CD8-positive, alpha-beta T cell (primary cell): ENCODE measurements at regions of chrX and their contacts with region 1.

Region 1: GRCh38 chrX:135521405-135522189 is 1.1 kb downstream of the INTS6L start:
- DNase-seq: peak; percentile 64 to 94 (median 79)
- ATAC-seq: peak; percentile 70
- H3K4me3 ChIP-seq: peak overlapping the region; percentile 73 to 85
- H3K4me3 Mint-ChIP-seq: peak overlapping the region; percentile 99
- H3K27ac ChIP-seq: peak overlapping the region; percentile 61 to 84
- H3K27ac Mint-ChIP-seq: peak overlapping the region; percentile 88
- H3K4me1 ChIP-seq: peaks cover 4% of the 10 kb centered on the region
- H3K4me1 Mint-ChIP-seq: peaks cover 46% of the 10 kb centered on the region
- H3K27me3 ChIP-seq: no peaks in the 10 kb centered on the region
- H3K27me3 Mint-ChIP-seq: no peaks in the 10 kb centered on the region
- CTCF ChIP-seq: no peak

Region 2: GRCh38 chrX:135003876-135004623 is 517.5 kb before region 1 on chrX:
- CTCF ChIA-PET with region 1: no interaction called
- POLR2A ChIA-PET with region 1: no interaction called
- intact Hi-C with region 1: loop called in 1 of 2 experiments (anchors 5 kb)
- DNase-seq: peak; percentile 72 to 93 (median 89)
- ATAC-seq: peak; percentile 98
- H3K4me3 ChIP-seq: peak overlapping the region; percentile 52 to 57
- H3K4me3 Mint-ChIP-seq: peak overlapping the region; percentile 88
- H3K27ac ChIP-seq: peak overlapping the region; percentile 38 to 72
- H3K27ac Mint-ChIP-seq: peak overlapping the region; percentile 91
- H3K4me1 ChIP-seq: peaks cover 9% of the 10 kb centered on the region
- H3K4me1 Mint-ChIP-seq: peaks cover 12% of the 10 kb centered on the region
- H3K27me3 ChIP-seq: no peaks in the 10 kb centered on the region
- H3K27me3 Mint-ChIP-seq: no peaks in the 10 kb centered on the region
- CTCF ChIP-seq: no peak

Region 3: GRCh38 chrX:135384161-135384836 is 137.3 kb before region 1 on chrX:
- CTCF ChIA-PET with region 1: no interaction called
- POLR2A ChIA-PET with region 1: no interaction called
- intact Hi-C with region 1: loop called in 1 of 2 experiments (anchors 1 kb)
- DNase-seq: peak; percentile 0 to 82 (median 30)
- ATAC-seq: peak; percentile 93
- H3K4me3 ChIP-seq: peak overlapping the region in 1 of 2 experiments; percentile 10
- H3K4me3 Mint-ChIP-seq: peak overlapping the region; percentile 66
- H3K27ac ChIP-seq: peak overlapping the region in 1 of 2 experiments; percentile 41
- H3K27ac Mint-ChIP-seq: peak overlapping the region; percentile 76
- H3K4me1 ChIP-seq: peaks cover 35% of the 10 kb centered on the region
- H3K4me1 Mint-ChIP-seq: peaks cover 42% of the 10 kb centered on the region
- H3K27me3 ChIP-seq: no peaks in the 10 kb centered on the region
- H3K27me3 Mint-ChIP-seq: no peaks in the 10 kb centered on the region
- CTCF ChIP-seq: no peak

Region 4: GRCh38 chrX:135536877-135537276 is 15.3 kb after region 1 on chrX:
- CTCF ChIA-PET with region 1: no interaction called
- POLR2A ChIA-PET with region 1: interaction called, 4 read pairs
- intact Hi-C with region 1: loop called in 1 of 2 experiments (anchors 2 kb)
- DNase-seq: peak in 2 of 9 experiments; percentile 14 to 47
- ATAC-seq: peak; percentile 75
- H3K4me3 ChIP-seq: no peak overlapping the region
- H3K4me3 Mint-ChIP-seq: peak overlapping the region; percentile 19
- H3K27ac ChIP-seq: peak overlapping the region in 1 of 2 experiments; percentile 37
- H3K27ac Mint-ChIP-seq: peak overlapping the region; percentile 67
- H3K4me1 ChIP-seq: peaks cover 42% of the 10 kb centered on the region
- H3K4me1 Mint-ChIP-seq: peaks cover 67% of the 10 kb centered on the region
- H3K27me3 ChIP-seq: no peaks in the 10 kb centered on the region
- H3K27me3 Mint-ChIP-seq: no peaks in the 10 kb centered on the region
- CTCF ChIP-seq: no peak

Region 5: GRCh38 chrX:135973548-135974278 is 452.1 kb after region 1 on chrX and contains the start of gene MMGT1:
- CTCF ChIA-PET with region 1: no interaction called
- POLR2A ChIA-PET with region 1: interaction called, 3 read pairs
- intact Hi-C with region 1: loop called (anchors 2 to 5 kb)
- DNase-seq: peak; percentile 62 to 92 (median 78)
- ATAC-seq: peak; percentile 87
- H3K4me3 ChIP-seq: peak within 1 kb of the TSS; percentile 91 to 99
- H3K4me3 Mint-ChIP-seq: peak within 1 kb of the TSS; percentile 97
- H3K27ac ChIP-seq: peak within 1 kb of the TSS; percentile 93 to 94
- H3K27ac Mint-ChIP-seq: peak within 1 kb of the TSS; percentile 96
- H3K4me1 ChIP-seq: peaks cover 14% of the 10 kb centered on the region
- H3K4me1 Mint-ChIP-seq: peaks cover 36% of the 10 kb centered on the region
- H3K27me3 ChIP-seq: no peaks in the 10 kb centered on the region
- H3K27me3 Mint-ChIP-seq: no peaks in the 10 kb centered on the region
- CTCF ChIP-seq: no peak
- total RNA-seq, gene MMGT1: 35.0 to 35.6 TPM

Region 6: GRCh38 chrX:136496770-136497598 is 975.4 kb after region 1 on chrX and contains the start of gene HTATSF1:
- CTCF ChIA-PET with region 1: no interaction called
- POLR2A ChIA-PET with region 1: no interaction called
- intact Hi-C with region 1: loop called in 1 of 2 experiments (anchors 5 kb)
- DNase-seq: peak; percentile 70 to 94 (median 83)
- ATAC-seq: peak; percentile 83
- H3K4me3 ChIP-seq: peak within 1 kb of the TSS; percentile 44 to 83
- H3K4me3 Mint-ChIP-seq: peak within 1 kb of the TSS; percentile 92
- H3K27ac ChIP-seq: peak within 1 kb of the TSS; percentile 84 to 94
- H3K27ac Mint-ChIP-seq: peak within 1 kb of the TSS; percentile 99
- H3K4me1 ChIP-seq: peaks cover 18% of the 10 kb centered on the region
- H3K4me1 Mint-ChIP-seq: peaks cover 23% of the 10 kb centered on the region
- H3K27me3 ChIP-seq: no peaks in the 10 kb centered on the region
- H3K27me3 Mint-ChIP-seq: no peaks in the 10 kb centered on the region
- CTCF ChIP-seq: no peak
- total RNA-seq, gene HTATSF1: 28.5 to 29.5 TPM